Mammary epithelial cell (primary cell): ENCODE measurements at regions of chrX and their contacts with region 1.

Region 1: GRCh38 chrX:124406294-124407014 is 60.1 kb downstream of the SH2D1A start:
- DNase-seq: peak; percentile 81
- H3K4me3 ChIP-seq: no peak overlapping the region
- H3K27ac ChIP-seq: no peak overlapping the region
- H3K4me1 ChIP-seq: peaks cover 7% of the 10 kb centered on the region
- H3K27me3 ChIP-seq: no peaks in the 10 kb centered on the region
- CTCF ChIP-seq: peak; percentile 67 to 71

Region 2: GRCh38 chrX:124555036-124555595 is 148.7 kb after region 1 on chrX:
- CTCF ChIA-PET with region 1: no interaction called
- dilution Hi-C with region 1: no loop called
- in situ Hi-C with region 1: no loop called
- intact Hi-C with region 1: loop called (anchors 10 kb)
- DNase-seq: peak; percentile 91
- H3K4me3 ChIP-seq: no peak overlapping the region
- H3K27ac ChIP-seq: peak overlapping the region; percentile 85
- H3K4me1 ChIP-seq: peaks cover 21% of the 10 kb centered on the region
- H3K27me3 ChIP-seq: no peaks in the 10 kb centered on the region
- CTCF ChIP-seq: no peak